ENCODE measurements at regions of chr15 and their contacts with region 1.

Region 1: DNA sequence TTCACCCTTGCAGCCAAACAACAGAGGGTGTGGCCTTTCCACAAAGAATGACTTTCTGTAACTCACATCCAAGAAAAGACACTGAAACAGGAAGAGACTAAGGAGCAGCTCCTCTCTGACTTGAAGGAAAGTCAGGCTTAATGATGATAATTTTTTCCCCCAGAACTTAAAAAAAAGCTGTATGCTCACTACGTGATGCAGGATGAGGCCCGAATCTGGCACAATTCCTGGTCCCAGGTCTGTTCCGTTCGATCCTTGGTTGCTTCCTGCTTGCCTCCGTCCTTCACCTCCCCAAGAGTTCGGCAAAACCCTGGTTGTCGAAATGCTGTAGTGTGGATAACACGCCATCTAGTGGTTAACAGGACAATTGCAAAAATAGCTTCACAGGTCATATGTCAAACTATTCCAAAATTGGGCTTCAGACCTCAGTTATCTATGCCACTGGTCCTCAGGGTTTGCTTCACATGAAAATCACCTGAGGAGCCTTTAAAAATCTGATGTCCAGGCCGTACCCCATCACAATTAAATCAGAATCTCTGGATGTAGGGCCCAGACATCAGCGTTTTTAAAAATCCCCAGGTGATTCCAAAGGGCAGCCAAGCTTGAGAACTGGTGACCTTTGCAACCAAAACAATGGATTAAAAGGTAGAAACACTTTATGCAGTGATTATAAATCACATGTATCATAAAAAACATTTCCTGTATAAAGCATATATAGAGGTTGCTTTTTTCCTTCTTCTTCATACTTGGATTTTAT is 28.1 kb upstream of the SYNM start:
- DNase-seq: peak; percentile 47
- ATAC-seq: peak; percentile 80
- H3K4me3 Mint-ChIP-seq: peak overlapping the region; percentile 69
- H3K27ac Mint-ChIP-seq: no peak overlapping the region
- H3K4me1 Mint-ChIP-seq: peaks cover 5% of the 10 kb centered on the region
- H3K27me3 Mint-ChIP-seq: no peaks in the 10 kb centered on the region
- CTCF ChIP-seq: peak; percentile 74

Region 2: GRCh38 chr15:98442379-98442833 is 634.3 kb before region 1 on chr15:
- CTCF ChIA-PET with region 1: interaction called, 5 read pairs
- POLR2A ChIA-PET with region 1: no interaction called
- intact Hi-C with region 1: loop called (anchors 1 kb)
- DNase-seq: peak; percentile 74
- ATAC-seq: peak; percentile 88
- H3K4me3 Mint-ChIP-seq: no peak overlapping the region
- H3K27ac Mint-ChIP-seq: no peak overlapping the region
- H3K4me1 Mint-ChIP-seq: peaks cover 3% of the 10 kb centered on the region
- H3K27me3 Mint-ChIP-seq: no peaks in the 10 kb centered on the region
- CTCF ChIP-seq: peak; percentile 84

Region 3: DNA sequence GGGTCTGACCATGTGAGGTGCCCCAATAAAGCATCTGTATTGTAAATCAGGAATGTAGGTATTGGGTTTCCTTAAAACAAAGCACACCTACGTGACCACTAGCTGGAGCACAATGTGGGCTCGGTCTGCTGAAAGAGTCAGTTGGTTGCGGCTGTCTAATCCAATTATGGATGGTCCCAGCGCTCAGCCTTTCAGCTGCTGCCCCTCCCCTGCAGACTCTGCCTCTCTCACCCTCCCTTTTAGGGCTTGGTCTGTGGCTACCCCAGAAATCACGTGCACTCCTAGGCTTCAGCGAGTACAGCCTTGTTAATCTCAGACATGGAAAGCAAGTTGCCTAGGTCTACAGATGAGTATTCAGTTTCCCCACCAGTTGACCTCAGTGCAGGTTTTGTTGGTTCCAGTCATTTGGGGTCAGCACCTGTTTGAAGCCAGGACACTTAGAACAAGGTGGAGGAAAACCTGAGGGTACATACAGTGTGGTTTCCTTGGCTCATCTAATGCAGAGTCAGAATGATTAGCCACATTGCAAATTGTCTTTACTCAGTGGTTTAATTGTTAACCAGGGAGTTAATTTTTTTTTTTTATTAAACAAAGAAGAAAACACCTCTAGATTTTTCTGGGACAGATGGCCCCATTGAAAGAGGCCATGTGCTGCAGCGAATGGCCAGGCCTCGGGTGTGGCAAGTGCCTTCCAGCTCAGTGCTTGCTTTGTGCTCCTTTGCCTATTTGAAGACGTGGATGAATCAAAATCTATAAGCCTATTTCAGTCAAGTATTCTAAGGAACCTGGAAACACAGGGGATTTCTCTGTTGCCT is 290.7 kb before region 1 on chr15:
- CTCF ChIA-PET with region 1: no interaction called
- POLR2A ChIA-PET with region 1: no interaction called
- intact Hi-C with region 1: loop called (anchors 5 kb)
- DNase-seq: peak; percentile 31
- ATAC-seq: peak; percentile 78
- H3K4me3 Mint-ChIP-seq: no peak overlapping the region
- H3K27ac Mint-ChIP-seq: no peak overlapping the region
- H3K4me1 Mint-ChIP-seq: peaks cover 43% of the 10 kb centered on the region
- H3K27me3 Mint-ChIP-seq: no peaks in the 10 kb centered on the region
- CTCF ChIP-seq: no peak

Region 4: DNA sequence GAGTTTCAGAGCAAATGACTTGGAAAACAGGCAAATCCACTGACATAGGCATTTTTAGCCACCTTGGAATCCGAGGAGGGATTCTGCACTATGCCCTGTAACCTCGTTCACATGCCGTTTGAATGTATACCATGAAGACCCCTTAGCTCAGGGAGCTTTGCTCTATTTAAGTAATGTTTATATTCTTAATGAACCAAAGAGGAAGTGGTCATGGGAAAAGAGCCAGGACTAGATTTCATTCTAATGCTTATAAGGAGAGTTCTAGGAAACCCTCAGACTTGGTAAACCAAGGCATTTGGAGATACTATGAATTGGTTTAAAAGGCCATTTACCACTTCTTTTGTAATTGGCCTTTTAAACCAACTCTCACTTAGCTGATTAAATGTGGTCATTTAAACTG is 249.5 kb before region 1 on chr15:
- CTCF ChIA-PET with region 1: no interaction called
- POLR2A ChIA-PET with region 1: no interaction called
- intact Hi-C with region 1: no loop called
- DNase-seq: no peak
- ATAC-seq: no peak
- H3K4me3 Mint-ChIP-seq: no peak overlapping the region
- H3K27ac Mint-ChIP-seq: no peak overlapping the region
- H3K4me1 Mint-ChIP-seq: peaks cover 5% of the 10 kb centered on the region
- H3K27me3 Mint-ChIP-seq: no peaks in the 10 kb centered on the region
- CTCF ChIP-seq: no peak

Region 5: DNA sequence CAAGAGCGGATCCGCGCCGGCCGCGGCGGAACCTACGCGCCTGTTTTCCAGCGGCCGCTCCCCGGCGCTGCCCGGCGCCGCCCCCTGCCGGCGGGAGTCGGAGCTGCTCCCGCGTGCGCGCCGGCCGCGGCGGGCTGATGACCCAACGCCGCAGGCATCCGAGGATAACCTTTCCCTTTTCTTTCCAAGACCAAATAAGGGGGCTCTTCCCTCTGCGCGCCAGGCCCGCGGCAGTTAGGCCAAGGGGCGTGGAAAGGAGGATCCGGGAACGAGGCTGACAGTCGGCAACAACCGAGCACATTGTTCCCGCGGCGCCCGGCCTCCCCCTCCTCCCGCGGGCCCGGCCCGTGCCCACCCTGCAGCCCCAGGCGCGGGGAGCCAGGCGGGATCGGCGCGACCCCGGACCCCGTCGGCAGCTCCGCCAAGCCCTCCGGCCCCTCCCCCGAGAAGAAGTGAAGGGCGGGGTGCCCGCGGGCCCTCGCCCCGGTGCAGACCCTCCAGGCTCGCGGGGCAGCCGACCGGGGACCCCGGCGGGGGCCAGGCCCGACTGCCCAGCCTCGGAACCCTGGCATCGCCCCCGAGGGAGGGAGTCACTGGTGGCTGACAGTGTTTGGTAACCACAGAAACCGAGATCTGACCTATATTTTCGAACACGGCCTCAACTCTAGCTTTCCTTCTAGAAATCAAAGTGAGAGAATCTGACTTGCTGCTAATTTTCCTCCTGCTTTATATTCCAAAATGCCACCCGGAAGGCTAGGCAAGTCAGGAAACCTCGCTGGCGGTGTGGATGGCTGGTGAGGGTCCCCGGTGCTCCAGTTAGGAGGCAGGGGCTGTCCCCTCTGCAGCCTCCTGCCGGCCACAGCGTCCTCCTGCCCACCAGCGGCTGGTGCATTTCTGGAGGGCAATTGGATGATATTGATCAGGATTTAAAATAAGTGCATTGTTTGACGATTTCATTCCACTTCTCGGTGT is 17.4 kb before region 1 on chr15:
- CTCF ChIA-PET with region 1: interaction called, 88 read pairs
- POLR2A ChIA-PET with region 1: interaction called, 5 read pairs
- intact Hi-C with region 1: no loop called
- DNase-seq: peak; percentile 39
- ATAC-seq: peak; percentile 89
- H3K4me3 Mint-ChIP-seq: peak overlapping the region; percentile 58
- H3K27ac Mint-ChIP-seq: no peak overlapping the region
- H3K4me1 Mint-ChIP-seq: peaks cover 8% of the 10 kb centered on the region
- H3K27me3 Mint-ChIP-seq: peaks cover 30% of the 10 kb centered on the region
- CTCF ChIP-seq: peak; percentile 76